Activated B cell treated with CpG ODN at 0.5 μM for 24 hours (primary cell): ENCODE measurements at regions of chr11 and their contacts with region 1.

Region 1: DNA sequence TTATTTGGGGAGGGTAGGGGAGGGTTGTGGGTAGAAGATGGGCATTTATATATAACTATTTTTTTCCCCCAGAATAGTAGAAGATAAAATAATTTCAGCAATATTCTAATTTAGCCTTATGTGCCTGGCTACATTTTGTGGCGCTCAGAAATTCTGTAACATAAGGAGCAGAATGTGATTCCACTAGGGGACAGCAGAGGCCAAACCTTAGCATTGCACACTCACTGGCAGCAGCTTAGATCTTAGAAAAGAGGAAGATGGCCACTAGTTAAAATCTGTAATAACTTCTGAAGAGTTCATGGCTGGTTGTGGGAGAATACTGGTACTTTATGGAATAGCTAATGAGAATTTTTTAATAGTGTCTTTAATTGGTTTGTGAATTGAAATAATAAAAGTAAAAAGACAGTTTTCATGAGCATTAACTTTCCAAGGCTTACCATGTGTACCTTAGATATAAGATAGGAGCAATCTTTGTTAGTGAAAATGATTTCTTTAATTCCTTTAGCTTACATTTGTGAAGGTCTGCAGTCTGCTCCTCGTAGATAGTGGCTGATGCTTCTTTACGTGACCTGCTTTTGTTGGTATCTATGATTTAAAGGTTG is 33.1 kb downstream of the DDX10 start:
- DNase-seq: no peak
- ATAC-seq: peak; percentile 92
- H3K4me3 Mint-ChIP-seq: no peak overlapping the region
- H3K27ac Mint-ChIP-seq: no peak overlapping the region
- H3K4me1 Mint-ChIP-seq: no peaks in the 10 kb centered on the region
- H3K27me3 Mint-ChIP-seq: no peaks in the 10 kb centered on the region
- CTCF ChIP-seq: no peak

Region 2: GRCh38 chr11:108733479-108734116 is 35.6 kb after region 1 on chr11:
- CTCF ChIA-PET with region 1: interaction called, 12 read pairs
- POLR2A ChIA-PET with region 1: no interaction called
- intact Hi-C with region 1: loop called (anchors 1 kb)
- DNase-seq: no peak
- ATAC-seq: peak; percentile 92
- H3K4me3 Mint-ChIP-seq: peak overlapping the region; percentile 8
- H3K27ac Mint-ChIP-seq: peak overlapping the region; percentile 62
- H3K4me1 Mint-ChIP-seq: peaks cover 37% of the 10 kb centered on the region
- H3K27me3 Mint-ChIP-seq: no peaks in the 10 kb centered on the region
- CTCF ChIP-seq: no peak

Region 3: DNA sequence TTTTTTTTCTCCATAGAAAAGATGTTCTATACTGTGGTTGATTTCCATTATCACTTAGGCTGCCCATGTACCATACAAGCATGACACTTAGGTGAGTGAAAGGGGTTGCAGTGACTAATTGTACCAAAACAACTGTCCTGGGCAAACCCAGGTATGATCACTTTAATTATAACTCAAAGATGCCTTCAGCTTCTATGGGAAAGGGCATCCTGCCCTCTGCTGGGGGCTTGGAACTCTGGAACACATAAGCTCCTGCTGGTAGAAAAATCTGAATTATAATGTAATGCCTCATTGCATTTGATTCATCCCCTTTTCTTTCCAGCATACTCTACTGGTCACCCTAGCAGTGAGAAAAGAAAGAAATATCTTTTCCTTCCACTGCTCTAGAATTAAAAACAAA is 173.2 kb after region 1 on chr11:
- CTCF ChIA-PET with region 1: interaction called, 15 read pairs
- POLR2A ChIA-PET with region 1: no interaction called
- intact Hi-C with region 1: loop called (anchors 1 kb)
- DNase-seq: no peak
- ATAC-seq: no peak
- H3K4me3 Mint-ChIP-seq: no peak overlapping the region
- H3K27ac Mint-ChIP-seq: no peak overlapping the region
- H3K4me1 Mint-ChIP-seq: no peaks in the 10 kb centered on the region
- H3K27me3 Mint-ChIP-seq: no peaks in the 10 kb centered on the region
- CTCF ChIP-seq: no peak

Region 4: GRCh38 chr11:109697140-109697843 is 999.3 kb after region 1 on chr11:
- CTCF ChIA-PET with region 1: interaction called, 13 read pairs
- POLR2A ChIA-PET with region 1: no interaction called
- intact Hi-C with region 1: no loop called
- DNase-seq: no peak
- ATAC-seq: peak; percentile 60
- H3K4me3 Mint-ChIP-seq: no peak overlapping the region
- H3K27ac Mint-ChIP-seq: no peak overlapping the region
- H3K4me1 Mint-ChIP-seq: no peaks in the 10 kb centered on the region
- H3K27me3 Mint-ChIP-seq: peaks cover 2% of the 10 kb centered on the region
- CTCF ChIP-seq: no peak

Region 5: DNA sequence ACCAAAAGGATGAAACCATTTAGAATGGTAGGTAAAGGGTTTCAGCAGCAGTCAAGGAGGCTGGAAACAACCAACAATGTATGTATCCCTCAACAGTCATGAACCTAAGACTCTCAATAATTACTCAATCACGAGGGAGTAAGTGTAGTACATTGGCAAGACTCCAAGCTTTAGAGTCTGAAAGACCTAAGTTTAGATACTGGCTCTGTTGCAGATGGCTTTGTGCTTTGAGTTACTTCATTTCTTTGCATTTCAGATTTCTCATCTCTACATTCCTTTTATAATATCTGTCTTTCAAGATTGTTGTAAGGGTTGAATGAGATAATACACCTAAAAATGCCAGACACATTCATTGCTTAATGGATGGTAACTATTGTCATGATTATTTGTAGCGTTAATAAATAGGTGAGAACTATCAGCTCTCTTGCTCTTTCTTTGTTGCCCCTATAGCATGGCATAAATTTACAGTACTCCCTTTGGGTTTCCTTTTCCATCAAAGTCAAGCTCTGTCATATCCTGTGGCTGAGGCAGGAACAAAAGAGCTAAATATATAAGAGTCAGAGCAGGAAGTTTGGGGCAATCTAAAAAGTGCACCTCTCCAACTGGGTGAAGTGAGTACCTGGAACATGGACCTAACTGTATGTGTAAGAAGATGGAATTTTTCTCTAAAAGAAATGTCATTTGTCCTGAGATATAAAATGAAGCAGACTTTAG is 1167.0 kb after region 1 on chr11:
- CTCF ChIA-PET with region 1: interaction called, 3 read pairs
- POLR2A ChIA-PET with region 1: interaction called, 4 read pairs
- intact Hi-C with region 1: loop called (anchors 1 kb)
- DNase-seq: no peak
- ATAC-seq: no peak
- H3K4me3 Mint-ChIP-seq: no peak overlapping the region
- H3K27ac Mint-ChIP-seq: peak overlapping the region; percentile 74
- H3K4me1 Mint-ChIP-seq: peaks cover 17% of the 10 kb centered on the region
- H3K27me3 Mint-ChIP-seq: no peaks in the 10 kb centered on the region
- CTCF ChIP-seq: no peak

Region 6: GRCh38 chr11:109939166-109939810 is 1241.3 kb after region 1 on chr11:
- CTCF ChIA-PET with region 1: interaction called, 13 read pairs
- POLR2A ChIA-PET with region 1: no interaction called
- intact Hi-C with region 1: loop called (anchors 1 kb)
- DNase-seq: no peak
- ATAC-seq: no peak
- H3K4me3 Mint-ChIP-seq: no peak overlapping the region
- H3K27ac Mint-ChIP-seq: no peak overlapping the region
- H3K4me1 Mint-ChIP-seq: no peaks in the 10 kb centered on the region
- H3K27me3 Mint-ChIP-seq: peaks cover 10% of the 10 kb centered on the region
- CTCF ChIP-seq: no peak

Region 7: GRCh38 chr11:110376711-110377324 is 1678.8 kb after region 1 on chr11:
- CTCF ChIA-PET with region 1: no interaction called
- POLR2A ChIA-PET with region 1: no interaction called
- intact Hi-C with region 1: loop called (anchors 10 kb)
- DNase-seq: no peak
- ATAC-seq: peak; percentile 58
- H3K4me3 Mint-ChIP-seq: peak overlapping the region; percentile 13
- H3K27ac Mint-ChIP-seq: no peak overlapping the region
- H3K4me1 Mint-ChIP-seq: peaks cover 5% of the 10 kb centered on the region
- H3K27me3 Mint-ChIP-seq: no peaks in the 10 kb centered on the region
- CTCF ChIP-seq: no peak